Naive thymus-derived CD4-positive, alpha-beta T cell (primary cell): ENCODE measurements at regions of chr7 and their contacts with region 1.

Region 1: GRCh38 chr7:25179771-25180591 is 48.3 kb downstream of the NPVF start:
- DNase-seq: peak; percentile 88 to 99 (median 94)
- ATAC-seq: peak; percentile 99
- H3K4me3 ChIP-seq: peak overlapping the region; percentile 75
- H3K4me3 Mint-ChIP-seq: peak overlapping the region; percentile 82 to 93 (median 88)
- H3K27ac ChIP-seq: peak overlapping the region; percentile 86
- H3K27ac Mint-ChIP-seq: peak overlapping the region; percentile 83 to 96 (median 92)
- H3K4me1 ChIP-seq: peaks cover 6 to 7% of the 10 kb centered on the region in 2 donors
- H3K4me1 Mint-ChIP-seq: peaks cover 13 to 31% (median 22%) of the 10 kb centered on the region in 7 donors
- H3K27me3 ChIP-seq: no peaks in the 10 kb centered on the region
- H3K27me3 Mint-ChIP-seq: peaks cover 0 to 12% (median 0%) of the 10 kb centered on the region in 5 donors

Region 2: DNA sequence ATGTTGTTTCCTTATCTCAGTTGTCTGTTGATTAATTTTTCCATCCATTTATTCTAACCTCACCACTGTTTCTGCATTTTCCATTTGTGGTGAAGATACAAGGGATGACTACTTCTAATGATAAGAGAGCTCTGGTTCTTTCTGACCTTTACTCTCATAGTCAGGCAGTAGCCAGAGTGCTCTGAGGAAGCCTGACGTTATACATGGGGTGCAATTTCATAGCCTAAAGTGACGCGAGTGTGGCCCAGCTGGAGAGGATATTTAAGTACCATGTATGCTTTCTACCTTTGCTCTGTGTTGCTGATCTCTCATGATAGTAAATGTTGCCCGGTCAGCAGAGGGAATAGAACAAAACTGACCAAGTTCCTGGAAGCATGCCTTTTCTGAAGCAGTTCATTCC is 21.0 kb before region 1 on chr7:
- CTCF ChIA-PET with region 1: interaction called, 3 read pairs
- POLR2A ChIA-PET with region 1: no interaction called
- intact Hi-C with region 1: loop called in 1 of 2 experiments (anchors 1 kb)
- DNase-seq: no peak
- ATAC-seq: no peak
- H3K4me3 ChIP-seq: no peak overlapping the region
- H3K4me3 Mint-ChIP-seq: no peak overlapping the region
- H3K27ac ChIP-seq: no peak overlapping the region
- H3K27ac Mint-ChIP-seq: no peak overlapping the region
- H3K4me1 ChIP-seq: no peaks in the 10 kb centered on the region
- H3K4me1 Mint-ChIP-seq: peaks cover 0 to 5% (median 4%) of the 10 kb centered on the region in 7 donors
- H3K27me3 ChIP-seq: no peaks in the 10 kb centered on the region
- H3K27me3 Mint-ChIP-seq: no peaks in the 10 kb centered on the region

Region 3: DNA sequence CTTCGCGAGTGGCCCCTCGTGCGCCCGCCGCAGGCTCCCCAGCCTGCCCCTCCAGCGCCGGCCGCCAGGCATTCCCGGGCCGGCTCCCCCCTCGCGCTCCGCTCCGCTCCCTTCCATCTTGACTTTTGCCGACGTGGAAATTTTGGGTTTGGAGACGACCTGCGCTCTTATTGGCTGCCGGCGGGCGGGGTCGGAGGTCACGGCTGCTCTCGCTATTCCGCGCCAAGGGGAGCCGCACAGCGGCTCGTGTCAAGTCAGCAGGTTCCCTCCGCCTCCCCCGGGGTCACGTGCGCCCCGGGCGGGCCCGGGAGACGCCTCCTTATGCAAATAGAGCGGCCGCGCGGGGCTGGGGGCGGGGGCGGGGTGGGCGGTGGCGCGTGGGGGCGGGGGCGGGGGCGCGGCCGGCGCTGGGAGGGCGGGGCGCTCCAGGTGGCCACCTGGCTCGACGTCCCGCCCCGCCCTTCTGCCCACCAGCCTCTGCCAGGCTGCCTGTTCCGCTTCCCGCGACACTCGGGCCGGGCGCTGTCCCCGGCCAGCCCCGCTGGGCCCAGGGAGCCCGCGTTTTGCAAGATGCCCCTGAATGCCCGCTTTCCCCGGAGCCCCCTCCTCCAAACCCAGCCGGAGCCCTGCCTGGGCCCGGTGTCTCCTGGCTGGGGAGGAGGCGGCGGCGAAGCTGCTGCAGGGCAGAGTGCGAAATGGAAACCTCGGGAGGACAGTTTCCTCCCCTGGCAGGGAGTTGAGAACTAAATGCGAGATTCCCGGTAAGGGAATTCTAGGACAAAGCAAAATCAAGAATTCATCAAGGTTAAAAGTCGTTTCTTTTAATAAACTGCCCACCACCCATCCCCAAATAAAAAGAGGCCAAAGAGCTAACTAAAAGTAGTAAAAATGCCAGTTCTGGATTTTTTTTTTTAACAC is 771.3 kb after region 1 on chr7:
- CTCF ChIA-PET with region 1: no interaction called
- POLR2A ChIA-PET with region 1: no interaction called
- intact Hi-C with region 1: loop called in 1 of 2 experiments (anchors 5 kb)
- DNase-seq: peak; percentile 70 to 94 (median 87)
- ATAC-seq: peak; percentile 99
- H3K4me3 ChIP-seq: peak overlapping the region; percentile 61
- H3K4me3 Mint-ChIP-seq: peak overlapping the region; percentile 87 to 94 (median 92)
- H3K27ac ChIP-seq: peak overlapping the region; percentile 52
- H3K27ac Mint-ChIP-seq: peak overlapping the region in 7 of 9 donors; percentile 45 to 87 (median 81)
- H3K4me1 ChIP-seq: peaks cover 7 to 14% of the 10 kb centered on the region in 2 donors
- H3K4me1 Mint-ChIP-seq: peaks cover 16 to 31% (median 20%) of the 10 kb centered on the region in 7 donors
- H3K27me3 ChIP-seq: no peaks in the 10 kb centered on the region
- H3K27me3 Mint-ChIP-seq: peaks cover 0 to 22% (median 5%) of the 10 kb centered on the region in 5 donors